Activated CD8-positive, alpha-beta T cell treated with anti-CD3 and anti-CD28 coated beads for 36 hours (primary cell): ENCODE measurements at regions of chr2 and their contacts with region 1.

Region 1: DNA sequence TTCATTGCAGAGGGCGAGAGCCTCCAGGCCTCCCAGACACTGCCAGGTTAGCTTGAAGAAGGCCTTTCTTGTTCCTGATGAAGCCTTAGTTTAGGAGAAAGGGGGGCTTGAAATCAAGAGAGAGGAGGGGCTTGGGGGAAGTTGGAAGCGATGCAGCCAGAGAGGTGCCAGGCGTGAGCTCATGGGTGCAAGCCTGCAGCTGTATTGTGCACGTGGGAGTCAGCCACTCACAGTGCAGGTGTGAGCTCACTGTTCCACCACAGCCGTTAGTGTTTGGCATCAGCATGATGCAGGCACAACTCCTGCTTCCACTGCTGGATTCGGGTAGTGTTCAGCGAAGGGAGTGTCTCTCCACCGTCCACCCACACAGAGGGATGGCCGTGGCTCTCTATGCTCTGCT is 68.4 kb upstream of the ALPP start:
- DNase-seq: peak; percentile 75
- ATAC-seq: peak; percentile 70
- H3K4me3 Mint-ChIP-seq: peak overlapping the region; percentile 31
- H3K27ac Mint-ChIP-seq: peak overlapping the region; percentile 89
- H3K4me1 Mint-ChIP-seq: peaks cover 65% of the 10 kb centered on the region
- H3K27me3 Mint-ChIP-seq: no peaks in the 10 kb centered on the region
- CTCF ChIP-seq: no peak

Region 2: DNA sequence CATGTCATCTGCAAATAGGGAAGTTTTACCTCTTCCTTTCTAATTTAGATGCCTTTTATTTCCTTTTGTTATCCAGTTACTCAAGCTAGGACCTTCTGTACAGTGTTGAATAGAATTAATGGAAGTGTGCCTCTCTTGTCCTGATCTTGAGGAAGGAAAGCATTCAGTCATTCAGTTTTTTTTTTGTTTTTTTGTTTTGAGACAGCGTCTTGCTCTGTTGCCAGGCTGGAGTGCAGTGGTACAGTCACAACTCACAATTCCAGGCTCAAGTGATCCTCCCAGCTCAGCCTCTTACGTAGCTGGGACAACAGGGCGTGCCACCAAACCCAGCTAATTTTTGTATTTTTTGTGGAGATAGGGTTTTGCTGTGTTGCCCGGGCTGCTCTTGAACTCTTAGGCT is 135.5 kb before region 1 on chr2:
- CTCF ChIA-PET with region 1: no interaction called
- POLR2A ChIA-PET with region 1: no interaction called
- intact Hi-C with region 1: no loop called
- DNase-seq: no peak
- ATAC-seq: no peak
- H3K4me3 Mint-ChIP-seq: no peak overlapping the region
- H3K27ac Mint-ChIP-seq: no peak overlapping the region
- H3K4me1 Mint-ChIP-seq: peaks cover 5% of the 10 kb centered on the region
- H3K27me3 Mint-ChIP-seq: no peaks in the 10 kb centered on the region
- CTCF ChIP-seq: no peak

Region 3: DNA sequence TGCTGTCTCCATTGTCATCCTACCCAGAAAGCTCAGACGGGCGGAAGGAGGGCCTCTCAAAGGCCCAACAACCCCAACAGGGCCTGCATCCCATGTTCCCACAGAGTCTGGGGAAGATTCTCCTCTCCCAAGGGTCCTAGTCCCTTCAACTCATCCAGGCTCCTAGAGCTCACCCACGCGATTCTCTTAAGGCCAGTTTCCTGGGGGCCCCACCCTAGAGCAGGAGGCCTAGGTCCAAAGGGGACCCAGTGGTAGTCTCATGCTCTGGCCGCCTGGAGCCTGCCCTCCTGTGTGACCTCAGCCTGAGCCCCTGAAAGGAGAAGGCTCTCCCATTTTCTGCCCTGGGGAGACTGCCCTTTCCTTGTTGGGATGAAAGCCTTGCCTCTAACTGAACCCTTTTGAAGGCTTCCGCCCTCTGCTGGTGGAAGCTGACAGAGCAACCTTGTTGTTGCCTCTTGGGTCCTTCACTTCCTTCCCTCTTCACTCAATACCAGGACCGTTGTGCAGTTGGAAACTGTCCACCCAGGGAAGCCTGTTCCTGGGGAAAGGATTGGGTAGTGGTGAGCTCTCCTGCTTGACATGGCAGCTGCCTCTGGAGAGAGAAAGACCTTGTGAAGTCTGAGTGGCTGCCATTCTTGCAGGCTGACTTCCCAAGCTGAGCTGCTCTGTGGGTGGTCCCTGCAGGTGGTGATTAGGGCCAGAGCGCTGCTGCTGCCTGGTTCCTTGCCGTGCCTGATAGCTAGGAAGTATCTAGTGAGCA is 17.5 kb before region 1 on chr2:
- CTCF ChIA-PET with region 1: interaction called, 53 read pairs
- POLR2A ChIA-PET with region 1: interaction called, 6 read pairs
- intact Hi-C with region 1: no loop called
- DNase-seq: peak; percentile 77
- ATAC-seq: peak; percentile 74
- H3K4me3 Mint-ChIP-seq: no peak overlapping the region
- H3K27ac Mint-ChIP-seq: no peak overlapping the region
- H3K4me1 Mint-ChIP-seq: peaks cover 10% of the 10 kb centered on the region
- H3K27me3 Mint-ChIP-seq: no peaks in the 10 kb centered on the region
- CTCF ChIP-seq: peak; percentile 81

Region 4: DNA sequence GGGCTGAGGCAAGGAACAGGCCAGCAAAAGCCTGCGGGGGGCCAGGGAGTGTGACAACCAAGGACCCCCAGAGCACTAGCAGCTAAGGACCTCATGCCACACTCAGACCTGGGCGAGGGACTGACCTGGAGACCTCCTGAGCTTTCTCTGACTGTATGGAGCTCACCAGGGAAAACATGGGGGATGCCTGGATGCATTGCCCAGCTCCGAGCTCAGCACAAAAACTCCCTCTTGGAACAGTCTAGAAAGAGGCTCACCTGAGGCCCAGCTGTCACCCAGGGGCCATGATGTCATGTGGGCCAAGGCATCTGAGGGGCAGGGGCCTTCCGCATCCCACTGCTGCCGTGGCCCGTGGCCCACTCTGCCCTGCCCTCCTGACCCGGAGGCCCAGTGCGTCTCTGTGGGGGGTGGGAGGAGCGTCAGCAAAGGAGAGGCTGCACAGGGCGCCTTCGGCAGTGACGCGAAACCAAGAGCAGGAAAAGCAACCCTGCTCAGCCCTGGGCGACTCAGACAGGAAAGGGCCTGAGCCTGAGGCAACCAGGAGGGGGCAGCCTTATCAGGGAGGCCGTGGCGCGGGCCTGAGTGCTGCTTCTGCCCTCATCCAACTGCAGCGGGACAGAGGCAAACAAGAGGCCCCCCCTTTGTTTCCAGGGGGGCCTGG is 11.2 kb after region 1 on chr2:
- CTCF ChIA-PET with region 1: interaction called, 36 read pairs
- POLR2A ChIA-PET with region 1: interaction called, 5 read pairs
- intact Hi-C with region 1: no loop called
- DNase-seq: peak; percentile 87
- ATAC-seq: peak; percentile 81
- H3K4me3 Mint-ChIP-seq: peak overlapping the region; percentile 69
- H3K27ac Mint-ChIP-seq: peak overlapping the region; percentile 94
- H3K4me1 Mint-ChIP-seq: peaks cover 69% of the 10 kb centered on the region
- H3K27me3 Mint-ChIP-seq: no peaks in the 10 kb centered on the region
- CTCF ChIP-seq: peak; percentile 40